Mammary epithelial cell (primary cell): ENCODE measurements at regions of chr1 and their contacts with region 1.

Region 1: GRCh38 chr1:36752891-36753361 is 270.2 kb upstream of the CSF3R start:
- DNase-seq: no peak
- H3K4me3 ChIP-seq: no peak overlapping the region
- H3K27ac ChIP-seq: no peak overlapping the region
- H3K4me1 ChIP-seq: no peaks in the 10 kb centered on the region
- H3K27me3 ChIP-seq: no peaks in the 10 kb centered on the region
- CTCF ChIP-seq: no peak

Region 2: DNA sequence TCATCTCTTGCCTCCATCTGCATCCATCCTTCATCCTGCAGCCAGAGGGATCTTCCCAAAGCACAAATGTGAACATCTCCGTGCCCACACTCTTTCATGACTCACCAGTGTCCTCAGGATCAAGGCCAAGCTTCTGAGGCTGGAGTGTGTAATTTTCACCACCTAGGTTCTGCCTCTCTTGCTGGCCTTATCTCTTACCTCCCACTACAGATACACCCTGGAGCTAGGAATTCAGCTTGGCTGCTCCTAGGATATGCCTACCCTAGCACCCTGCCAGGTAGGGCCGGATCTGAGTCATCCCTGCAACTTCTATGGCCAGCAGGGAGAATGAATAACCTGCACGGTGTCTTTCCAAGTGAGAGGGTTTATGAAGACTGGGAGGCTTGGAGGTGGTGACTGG is 61.6 kb before region 1 on chr1:
- CTCF ChIA-PET with region 1: no interaction called
- dilution Hi-C with region 1: loop called (anchors 10 kb)
- in situ Hi-C with region 1: no loop called
- intact Hi-C with region 1: no loop called
- DNase-seq: peak; percentile 46
- H3K4me3 ChIP-seq: no peak overlapping the region
- H3K27ac ChIP-seq: no peak overlapping the region
- H3K4me1 ChIP-seq: peaks cover 4% of the 10 kb centered on the region
- H3K27me3 ChIP-seq: no peaks in the 10 kb centered on the region
- CTCF ChIP-seq: no peak

Region 3: DNA sequence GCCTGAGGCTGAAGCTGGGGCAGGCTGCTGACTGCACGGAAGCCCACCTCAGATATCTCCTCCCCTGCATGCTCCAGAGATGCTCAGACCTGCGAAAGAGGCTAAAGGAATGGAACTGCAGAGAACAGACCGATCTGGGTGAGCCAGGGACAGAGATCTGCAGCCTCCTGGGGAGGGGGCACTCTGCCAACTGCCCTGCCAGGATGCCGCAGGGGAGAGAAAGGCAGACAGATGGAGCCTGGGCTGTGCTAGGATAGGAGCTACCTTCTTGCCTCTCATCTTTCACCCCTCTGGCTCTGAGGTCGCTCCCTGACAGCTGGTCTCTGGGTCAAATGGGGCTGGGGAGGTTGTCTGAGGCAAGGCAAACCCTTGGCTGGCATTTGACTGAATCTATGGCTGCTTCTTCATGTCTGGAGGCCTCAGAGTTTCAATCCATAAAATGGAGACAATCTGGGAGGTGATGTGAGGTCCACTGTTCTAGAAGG is 43.2 kb after region 1 on chr1:
- CTCF ChIA-PET with region 1: no interaction called
- dilution Hi-C with region 1: loop called (anchors 5 kb)
- in situ Hi-C with region 1: no loop called
- intact Hi-C with region 1: no loop called
- DNase-seq: no peak
- H3K4me3 ChIP-seq: no peak overlapping the region
- H3K27ac ChIP-seq: no peak overlapping the region
- H3K4me1 ChIP-seq: no peaks in the 10 kb centered on the region
- H3K27me3 ChIP-seq: no peaks in the 10 kb centered on the region
- CTCF ChIP-seq: no peak